Aorta (tissue), 5 donors: ENCODE measurements at regions of chr6 and their contacts with region 1.

Region 1: DNA sequence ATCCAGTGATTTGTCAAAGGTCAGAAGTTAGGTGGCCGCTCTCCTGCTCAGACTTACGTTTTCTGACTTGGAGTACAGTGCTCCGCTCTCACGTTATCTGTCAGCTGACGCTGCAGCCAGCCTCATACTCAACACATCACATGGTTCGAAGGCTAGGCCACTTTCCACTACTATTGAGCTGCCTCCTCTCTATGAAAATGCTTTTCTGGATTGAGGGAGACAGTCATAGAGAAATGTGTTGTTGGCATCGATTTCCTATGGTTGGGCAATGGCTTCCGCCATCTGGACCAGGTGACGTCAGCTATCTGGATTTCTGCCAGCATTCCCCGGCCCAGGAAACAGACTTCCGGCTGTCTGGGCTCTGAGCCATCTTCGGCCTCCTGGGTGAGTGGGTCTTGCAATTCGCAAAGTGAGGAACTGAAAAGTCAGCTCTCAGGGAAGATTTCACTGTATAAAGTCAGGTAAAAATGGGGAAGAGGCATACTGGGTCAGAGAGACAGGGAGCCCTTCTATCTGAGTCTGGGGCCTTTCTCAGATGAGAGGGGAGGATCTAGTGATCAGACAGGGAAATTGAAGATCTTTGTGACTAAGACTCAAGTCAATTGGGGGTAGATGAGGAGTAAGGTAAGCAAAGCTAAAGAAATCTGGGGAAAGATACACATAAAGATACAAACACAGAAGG is 37.5 kb upstream of the IER3 start:
- DNase-seq: peak; percentile 98 to 99
- ATAC-seq: peak; percentile 93
- H3K4me3 ChIP-seq: no peak overlapping the region
- H3K27ac ChIP-seq: peak overlapping the region; percentile 71 to 96
- H3K4me1 ChIP-seq: no peaks in the 10 kb centered on the region
- H3K27me3 ChIP-seq: no peaks in the 10 kb centered on the region

Region 2: DNA sequence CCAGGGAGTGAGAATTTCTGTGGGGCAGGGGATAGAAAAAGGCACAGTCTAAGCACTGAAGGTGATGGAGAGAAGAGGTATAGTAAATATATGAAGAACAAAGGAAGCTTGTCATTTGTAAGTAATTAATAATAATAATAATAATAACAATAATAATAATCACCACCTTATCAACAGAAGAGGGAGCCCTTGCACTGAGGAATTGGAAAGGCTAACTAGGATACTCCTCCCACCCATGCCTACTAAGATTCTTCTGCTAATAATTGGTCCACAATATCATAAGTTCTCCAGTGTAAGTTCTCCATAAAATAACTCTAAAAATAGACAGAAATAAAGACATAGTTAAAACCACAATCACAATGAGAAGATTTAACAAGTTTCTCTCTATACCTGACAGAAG is 1405.9 kb before region 1 on chr6:
- intact Hi-C with region 1: no loop called
- DNase-seq: no peak
- ATAC-seq: no peak
- H3K4me3 ChIP-seq: no peak overlapping the region
- H3K27ac ChIP-seq: no peak overlapping the region
- H3K4me1 ChIP-seq: no peaks in the 10 kb centered on the region
- H3K27me3 ChIP-seq: no peaks in the 10 kb centered on the region

Region 3: DNA sequence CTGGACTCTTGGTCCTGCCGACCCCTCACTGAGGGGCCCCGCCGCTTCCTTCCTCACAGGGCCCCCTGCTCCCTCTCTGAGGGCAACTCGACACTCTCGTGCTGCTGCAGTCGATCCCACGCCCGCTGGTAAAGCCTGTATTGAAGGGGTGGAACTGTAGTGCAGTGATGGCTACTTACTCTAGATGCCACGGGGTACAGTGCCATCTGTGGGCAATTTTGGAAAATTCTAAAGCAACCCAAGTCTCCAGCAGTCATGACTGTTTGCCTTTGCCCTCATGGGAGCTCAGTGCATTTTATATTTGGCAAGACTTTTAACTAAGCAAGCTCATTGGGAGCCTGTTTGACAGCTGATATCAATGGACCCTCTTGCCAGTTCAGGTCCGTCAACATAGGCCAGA is 141.4 kb before region 1 on chr6:
- intact Hi-C with region 1: no loop called
- DNase-seq: no peak
- ATAC-seq: no peak
- H3K4me3 ChIP-seq: no peak overlapping the region
- H3K27ac ChIP-seq: no peak overlapping the region
- H3K4me1 ChIP-seq: no peaks in the 10 kb centered on the region
- H3K27me3 ChIP-seq: no peaks in the 10 kb centered on the region

Region 4: DNA sequence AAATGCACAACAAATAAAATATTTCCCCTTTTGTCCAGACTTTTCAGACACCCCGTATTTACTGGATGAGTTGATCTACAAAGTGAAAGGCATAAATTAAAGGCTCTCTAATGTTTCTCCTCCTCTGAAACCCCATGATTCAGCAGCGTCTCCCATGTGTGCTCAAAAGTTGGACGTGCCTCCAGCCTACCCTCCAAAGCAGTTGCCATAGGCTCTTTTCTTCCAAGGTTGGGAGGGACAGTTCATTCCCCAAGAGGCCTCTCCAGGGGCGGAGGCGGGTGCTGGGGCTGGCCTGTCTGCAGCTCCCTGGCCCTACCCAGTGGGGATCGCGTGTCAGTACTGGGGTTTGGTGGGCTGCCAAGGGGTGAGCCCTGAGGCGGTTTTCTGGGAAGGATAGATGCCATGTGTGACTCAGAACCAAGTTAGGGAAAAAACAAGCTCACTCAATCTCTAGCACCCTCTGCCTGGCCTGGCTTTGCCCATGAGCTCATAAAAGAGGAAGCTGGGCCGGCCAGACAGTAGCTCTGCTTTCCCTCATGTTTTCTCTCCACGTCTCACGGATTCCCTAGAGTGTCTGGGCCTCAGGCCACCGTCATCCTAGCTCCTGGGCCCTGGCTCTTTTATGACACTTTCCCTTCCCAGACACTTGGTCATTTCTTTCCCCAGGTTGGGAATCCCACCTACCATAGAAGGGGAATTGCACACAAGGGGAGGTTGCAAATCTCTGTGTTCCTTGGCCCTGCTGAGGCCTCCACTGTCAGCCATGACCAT is 29.5 kb before region 1 on chr6:
- intact Hi-C with region 1: loop called (anchors 1 to 2 kb)
- DNase-seq: peak; percentile 99
- ATAC-seq: peak; percentile 96
- H3K4me3 ChIP-seq: no peak overlapping the region
- H3K27ac ChIP-seq: peak overlapping the region; percentile 95 to 98
- H3K4me1 ChIP-seq: no peaks in the 10 kb centered on the region
- H3K27me3 ChIP-seq: no peaks in the 10 kb centered on the region

Region 5: DNA sequence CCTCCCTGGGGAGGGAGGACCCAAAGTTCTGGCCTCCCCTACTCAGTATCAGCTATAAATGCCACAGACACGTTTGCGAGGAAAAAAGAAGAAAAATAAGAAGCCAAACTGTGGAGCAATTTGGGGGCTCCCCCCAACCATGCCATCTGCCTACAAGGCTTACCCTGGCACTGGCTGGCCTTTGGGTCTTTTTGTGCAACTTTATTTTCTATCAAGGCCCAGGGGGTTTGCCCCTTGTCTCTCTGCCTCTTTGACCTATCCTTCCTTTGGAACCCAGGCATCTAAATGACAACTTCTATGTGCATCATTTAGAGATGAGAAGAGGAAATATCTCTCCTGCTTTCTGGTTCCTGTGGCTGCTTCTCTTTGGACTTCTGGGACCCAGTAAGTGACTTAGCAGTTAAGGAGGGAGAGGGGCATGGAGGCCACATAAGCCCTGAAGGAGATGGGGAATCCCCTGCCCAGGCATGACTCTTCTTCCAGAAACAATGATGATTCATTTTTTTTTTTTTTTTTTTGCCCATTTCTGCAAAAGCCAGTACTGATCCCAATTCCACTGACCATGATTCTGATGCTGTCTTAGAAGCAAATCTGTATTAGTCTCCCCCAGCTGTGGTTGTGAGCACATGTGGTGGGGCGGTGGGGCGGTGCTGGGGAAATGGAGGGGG is 228.6 kb after region 1 on chr6 and contains the start of gene MUC22:
- intact Hi-C with region 1: no loop called
- DNase-seq: no peak
- ATAC-seq: no peak
- H3K4me3 ChIP-seq: no peak within 1 kb of the TSS
- H3K27ac ChIP-seq: no peak within 1 kb of the TSS
- H3K4me1 ChIP-seq: no peaks in the 10 kb centered on the region
- H3K27me3 ChIP-seq: no peaks in the 10 kb centered on the region
- total RNA-seq, gene MUC22: not detected